ENCODE measurements at regions of chr1 and their contacts with region 1.

Region 1: GRCh38 chr1:180631766-180632325 is at the start of gene XPR1:
- DNase-seq: peak; percentile 97 to 99
- H3K4me3 ChIP-seq: peak within 1 kb of the TSS; percentile 82
- H3K4me3 Mint-ChIP-seq: no peak within 1 kb of the TSS
- H3K27ac Mint-ChIP-seq: no peak within 1 kb of the TSS
- H3K4me1 ChIP-seq: peaks cover 31% of the 10 kb centered on the region
- H3K4me1 Mint-ChIP-seq: peaks cover 10% of the 10 kb centered on the region
- H3K27me3 ChIP-seq: no peaks in the 10 kb centered on the region
- H3K27me3 Mint-ChIP-seq: no peaks in the 10 kb centered on the region
- CTCF ChIP-seq: peak in 1 of 2 experiments; percentile 44
- total RNA-seq, gene XPR1: 34.4 and 37.1 TPM in 2 replicates

Region 2: GRCh38 chr1:180451504-180451903 is 180.3 kb before region 1 on chr1:
- CTCF ChIA-PET with region 1: no interaction called
- POLR2A ChIA-PET with region 1: no interaction called
- intact Hi-C with region 1: no loop called
- DNase-seq: no peak
- H3K4me3 ChIP-seq: no peak overlapping the region
- H3K4me3 Mint-ChIP-seq: no peak overlapping the region
- H3K27ac Mint-ChIP-seq: no peak overlapping the region
- H3K4me1 ChIP-seq: no peaks in the 10 kb centered on the region
- H3K4me1 Mint-ChIP-seq: no peaks in the 10 kb centered on the region
- H3K27me3 ChIP-seq: no peaks in the 10 kb centered on the region
- H3K27me3 Mint-ChIP-seq: no peaks in the 10 kb centered on the region
- CTCF ChIP-seq: no peak

Region 3: GRCh38 chr1:180515864-180516388 is 115.9 kb before region 1 on chr1:
- CTCF ChIA-PET with region 1: interaction called, 3 read pairs
- POLR2A ChIA-PET with region 1: no interaction called
- intact Hi-C with region 1: loop called (anchors 1 kb)
- DNase-seq: peak; percentile 68 to 80
- H3K4me3 ChIP-seq: no peak overlapping the region
- H3K4me3 Mint-ChIP-seq: no peak overlapping the region
- H3K27ac Mint-ChIP-seq: no peak overlapping the region
- H3K4me1 ChIP-seq: 0 out of 2 replicates have a peak, but pooled peaks cover 7% of the 10 kb centered on the region
- H3K4me1 Mint-ChIP-seq: peaks cover 16% of the 10 kb centered on the region
- H3K27me3 ChIP-seq: no peaks in the 10 kb centered on the region
- H3K27me3 Mint-ChIP-seq: no peaks in the 10 kb centered on the region
- CTCF ChIP-seq: peak; percentile 80 to 82

Region 4: GRCh38 chr1:180652792-180653191 is 20.9 kb after region 1 on chr1:
- CTCF ChIA-PET with region 1: no interaction called
- POLR2A ChIA-PET with region 1: no interaction called
- intact Hi-C with region 1: no loop called
- DNase-seq: no peak
- H3K4me3 ChIP-seq: no peak overlapping the region
- H3K4me3 Mint-ChIP-seq: no peak overlapping the region
- H3K27ac Mint-ChIP-seq: no peak overlapping the region
- H3K4me1 ChIP-seq: no peaks in the 10 kb centered on the region
- H3K4me1 Mint-ChIP-seq: no peaks in the 10 kb centered on the region
- H3K27me3 ChIP-seq: no peaks in the 10 kb centered on the region
- H3K27me3 Mint-ChIP-seq: no peaks in the 10 kb centered on the region
- CTCF ChIP-seq: no peak

Region 5: GRCh38 chr1:180762796-180763195 is 130.9 kb after region 1 on chr1:
- CTCF ChIA-PET with region 1: interaction called, 11 read pairs
- POLR2A ChIA-PET with region 1: no interaction called
- intact Hi-C with region 1: no loop called
- DNase-seq: no peak
- H3K4me3 ChIP-seq: no peak overlapping the region
- H3K4me3 Mint-ChIP-seq: no peak overlapping the region
- H3K27ac Mint-ChIP-seq: no peak overlapping the region
- H3K4me1 ChIP-seq: no peaks in the 10 kb centered on the region
- H3K4me1 Mint-ChIP-seq: no peaks in the 10 kb centered on the region
- H3K27me3 ChIP-seq: no peaks in the 10 kb centered on the region
- H3K27me3 Mint-ChIP-seq: no peaks in the 10 kb centered on the region
- CTCF ChIP-seq: no peak

Region 6: DNA sequence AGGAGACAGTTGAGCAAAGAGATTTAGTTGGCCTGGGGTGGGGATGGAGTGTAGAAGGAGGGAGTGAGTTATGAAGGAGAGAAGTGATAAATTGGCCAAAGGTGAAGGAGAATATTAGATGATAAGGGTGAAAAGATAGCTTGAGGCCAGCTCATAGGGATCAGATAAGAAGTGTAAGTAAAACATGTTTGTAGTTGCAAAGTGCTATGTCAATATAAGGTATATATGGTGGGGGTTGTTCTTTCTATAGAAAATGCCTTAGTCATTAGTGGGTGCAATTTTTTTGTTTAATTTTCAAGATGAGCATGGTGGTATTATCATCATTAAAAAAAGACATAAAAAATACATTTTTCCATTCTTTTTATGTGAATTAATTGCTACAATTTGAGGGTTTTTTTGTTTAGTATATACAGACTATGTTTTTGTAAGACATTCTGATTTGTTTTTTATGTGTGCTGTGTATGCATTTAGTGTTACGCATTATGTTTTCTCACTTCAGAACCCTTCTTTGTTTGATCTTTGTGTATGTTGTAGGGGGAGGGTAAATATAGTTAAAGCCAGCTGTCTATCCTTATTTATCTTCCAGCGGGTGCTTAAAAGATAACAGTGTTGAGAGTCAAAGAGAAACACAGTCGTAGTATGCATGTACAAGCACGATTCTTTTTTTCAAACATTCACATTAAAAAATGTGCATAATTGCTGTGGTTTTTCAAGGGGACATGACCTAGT is 183.2 kb after region 1 on chr1:
- CTCF ChIA-PET with region 1: no interaction called
- POLR2A ChIA-PET with region 1: no interaction called
- intact Hi-C with region 1: loop called (anchors 1 kb)
- DNase-seq: peak in 1 of 2 experiments; percentile 26
- H3K4me3 ChIP-seq: no peak overlapping the region
- H3K4me3 Mint-ChIP-seq: peak overlapping the region; percentile 41
- H3K27ac Mint-ChIP-seq: no peak overlapping the region
- H3K4me1 ChIP-seq: peaks cover 35% of the 10 kb centered on the region
- H3K4me1 Mint-ChIP-seq: peaks cover 19% of the 10 kb centered on the region
- H3K27me3 ChIP-seq: no peaks in the 10 kb centered on the region
- H3K27me3 Mint-ChIP-seq: no peaks in the 10 kb centered on the region
- CTCF ChIP-seq: no peak

Measured in Caco-2 (cell line).